ENCODE measurements at regions of chr7 and their contacts with region 1.

Region 1: GRCh38 chr7:22110227-22110839 is 164.6 kb upstream of the CDCA7L start:
- ATAC-seq: peak; percentile 74 to 98 (median 94)
- H3K4me3 ChIP-seq: no peak overlapping the region
- H3K27ac ChIP-seq: no peak overlapping the region
- H3K4me1 ChIP-seq: no peaks in the 10 kb centered on the region

Region 2: DNA sequence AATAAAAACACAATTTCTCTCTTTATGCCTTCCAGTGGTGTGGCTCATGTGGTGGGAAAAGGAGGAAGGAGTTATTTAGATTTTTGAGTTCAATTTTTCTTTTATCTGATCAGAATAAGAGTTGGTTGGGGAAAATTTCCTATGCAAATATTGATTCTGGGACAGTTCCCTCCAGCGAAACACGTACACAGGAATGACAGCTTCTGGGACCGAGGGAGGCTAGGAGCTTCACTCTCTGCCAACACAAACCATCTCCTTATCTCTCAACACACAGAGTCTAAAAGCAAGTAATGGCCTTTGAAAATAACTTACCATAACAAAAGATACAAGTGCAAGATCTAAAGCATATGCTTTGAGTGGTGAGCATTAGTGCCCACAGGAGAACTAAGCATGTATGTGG is 123.9 kb after region 1 on chr7:
- in situ Hi-C with region 1: no loop called
- ATAC-seq: no peak
- H3K4me3 ChIP-seq: no peak overlapping the region
- H3K27ac ChIP-seq: no peak overlapping the region
- H3K4me1 ChIP-seq: no peaks in the 10 kb centered on the region

Region 3: DNA sequence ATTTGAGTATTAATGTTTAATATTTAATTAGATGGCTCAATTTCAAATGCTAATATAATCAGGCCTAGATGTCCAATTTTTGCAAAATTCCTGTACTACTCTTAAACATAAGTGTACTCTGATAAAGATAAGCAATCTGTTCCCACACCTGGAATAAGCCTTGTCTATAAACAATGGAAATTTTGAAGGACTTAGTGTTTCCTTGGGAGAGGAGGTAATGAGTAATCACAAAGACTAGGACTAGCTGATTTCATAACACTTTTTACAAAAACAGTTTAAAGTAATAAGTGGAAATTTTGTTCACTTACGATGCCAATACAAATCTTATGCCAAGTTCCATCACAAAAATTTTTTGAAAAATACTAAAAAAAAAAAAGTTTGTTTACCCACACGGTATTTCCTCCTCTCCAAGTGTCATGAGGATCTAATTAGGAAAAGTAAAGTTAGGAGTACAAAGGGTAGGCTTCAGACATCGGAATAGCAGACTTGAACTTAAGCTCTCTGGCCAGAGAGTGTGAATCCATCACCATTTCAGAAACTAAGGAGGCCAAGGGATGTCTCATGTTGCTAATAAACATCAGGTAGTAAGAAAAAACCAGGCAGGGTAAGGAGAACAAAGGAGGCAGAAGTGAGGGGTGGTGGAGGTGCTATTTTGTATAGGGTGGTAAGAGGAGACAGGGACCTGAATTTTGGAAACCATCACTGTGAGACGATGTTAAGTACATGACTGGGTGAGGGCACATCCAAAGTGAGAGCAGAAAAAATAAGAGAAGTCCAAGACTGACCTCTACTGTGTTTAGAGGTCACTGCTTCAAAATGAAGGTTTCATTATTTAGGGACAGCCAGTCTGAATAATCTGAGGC is 185.3 kb after region 1 on chr7:
- in situ Hi-C with region 1: loop called in 2 of 9 experiments (anchors 10 to 25 kb)
- ATAC-seq: peak in 3 of 8 experiments; percentile 57 to 83 (median 71)
- H3K4me3 ChIP-seq: no peak overlapping the region
- H3K27ac ChIP-seq: no peak overlapping the region
- H3K4me1 ChIP-seq: peaks cover 18 to 19% of the 10 kb centered on the region in 2 donors

Region 4: GRCh38 chr7:22307816-22308545 is 197.6 kb after region 1 on chr7:
- in situ Hi-C with region 1: no loop called
- ATAC-seq: no peak
- H3K4me3 ChIP-seq: no peak overlapping the region
- H3K27ac ChIP-seq: no peak overlapping the region
- H3K4me1 ChIP-seq: peaks cover 0 to under 1% of the 10 kb centered on the region in 2 donors

Measured in motor neuron (in vitro differentiated cells).